A549 (cell line): ENCODE measurements at regions of chr19 and their contacts with region 1.

Region 1: GRCh38 chr19:30682999-30683536 is 310.9 kb downstream of the ZNF536 start:
- DNase-seq: peak; percentile 74 to 95
- ATAC-seq: peak; percentile 62 to 89
- H3K4me3 ChIP-seq: no peak overlapping the region
- H3K27ac ChIP-seq: no peak overlapping the region
- H3K4me1 ChIP-seq: peaks cover 3% of the 10 kb centered on the region; the same call in 1 of the 3 replicates
- CTCF ChIP-seq: peak; percentile 98
- EP300 ChIP-seq: no peak
- POLR2A ChIP-seq: no peak
- RAD21 ChIP-seq: peak; percentile 98

Region 2: DNA sequence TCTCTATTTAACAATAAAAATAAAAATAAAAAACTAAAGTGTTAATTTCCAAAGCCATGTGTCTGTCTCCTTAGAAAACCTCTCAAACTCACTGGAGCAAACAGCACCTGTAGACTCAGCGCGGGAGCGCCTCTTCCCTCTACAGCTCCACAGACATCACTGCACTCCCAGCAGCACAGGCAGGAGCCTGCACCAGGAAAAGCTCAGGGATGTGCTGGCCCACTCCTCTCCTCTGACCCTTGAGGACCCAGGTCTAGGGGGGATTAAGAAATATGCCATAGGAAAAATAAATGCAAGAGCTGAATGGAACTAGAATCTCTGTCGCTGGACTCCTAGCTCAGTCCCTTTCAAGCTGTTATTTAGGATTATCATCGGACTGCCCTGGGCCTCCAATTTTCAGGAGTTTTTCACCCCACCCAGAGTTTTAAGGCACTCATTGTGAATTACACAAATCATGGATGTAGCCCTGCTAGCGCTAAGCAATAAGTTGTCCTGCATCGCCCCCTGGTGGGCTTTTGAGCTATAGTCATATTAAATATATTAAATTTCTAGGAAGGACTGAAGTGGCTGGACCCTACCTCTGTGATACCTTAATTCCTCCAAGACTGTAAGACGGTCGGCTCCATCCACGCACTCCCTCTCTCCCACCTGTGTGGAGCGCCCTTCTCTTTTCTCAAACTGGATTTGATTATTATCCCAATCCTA is 1804.1 kb before region 1 on chr19:
- CTCF ChIA-PET with region 1: interaction called, 10 read pairs
- POLR2A ChIA-PET with region 1: no interaction called
- DNase-seq: peak; percentile 79 to 83
- ATAC-seq: peak; percentile 36 to 90; a peak in 4 of 6 replicates
- H3K4me3 ChIP-seq: no peak overlapping the region
- H3K27ac ChIP-seq: no peak overlapping the region
- H3K4me1 ChIP-seq: no peaks in the 10 kb centered on the region
- CTCF ChIP-seq: peak; percentile 86
- EP300 ChIP-seq: no peak
- POLR2A ChIP-seq: no peak
- RAD21 ChIP-seq: peak; percentile 89 to 94

Region 3: GRCh38 chr19:30590596-30591229 is 92.4 kb before region 1 on chr19:
- CTCF ChIA-PET with region 1: no interaction called
- POLR2A ChIA-PET with region 1: no interaction called
- DNase-seq: no peak
- ATAC-seq: no peak
- H3K4me3 ChIP-seq: no peak overlapping the region
- H3K27ac ChIP-seq: no peak overlapping the region
- H3K4me1 ChIP-seq: no peaks in the 10 kb centered on the region
- CTCF ChIP-seq: no peak
- EP300 ChIP-seq: no peak
- POLR2A ChIP-seq: no peak
- RAD21 ChIP-seq: no peak

Region 4: DNA sequence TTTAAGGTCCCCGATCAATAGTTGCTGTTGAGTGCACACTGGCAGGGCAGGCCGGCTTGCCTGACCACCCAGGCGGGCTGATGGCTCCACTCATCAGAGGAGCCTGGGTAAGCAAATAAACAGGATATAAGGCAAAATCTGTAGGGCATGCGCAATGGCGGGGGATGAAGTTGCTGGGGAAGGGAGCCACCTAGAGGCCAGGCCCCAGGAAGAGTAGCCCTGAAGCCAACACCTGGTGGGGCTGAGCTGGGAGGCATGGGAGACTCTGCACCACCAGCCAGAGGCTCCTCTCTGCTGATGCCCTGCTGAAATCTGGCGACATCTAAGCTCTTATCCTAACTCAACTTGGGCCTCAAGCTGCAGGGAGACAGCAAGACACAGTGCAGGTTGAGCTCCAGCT is 13.4 kb after region 1 on chr19:
- CTCF ChIA-PET with region 1: interaction called, 75 read pairs
- POLR2A ChIA-PET with region 1: no interaction called
- DNase-seq: peak; percentile 78 to 87
- ATAC-seq: peak; percentile 55 to 94; a peak in 5 of 6 replicates
- H3K4me3 ChIP-seq: no peak overlapping the region
- H3K27ac ChIP-seq: no peak overlapping the region
- H3K4me1 ChIP-seq: no peaks in the 10 kb centered on the region
- CTCF ChIP-seq: peak; percentile 37
- EP300 ChIP-seq: no peak
- POLR2A ChIP-seq: no peak
- RAD21 ChIP-seq: peak in 1 of 2 experiments; percentile 21; a peak in 1 of 5 replicates

Region 5: GRCh38 chr19:30719189-30719998 is 36.3 kb after region 1 on chr19:
- CTCF ChIA-PET with region 1: interaction called, 16 read pairs
- POLR2A ChIA-PET with region 1: no interaction called
- DNase-seq: peak in 1 of 2 experiments; percentile 33
- ATAC-seq: peak; percentile 73 to 80
- H3K4me3 ChIP-seq: peak overlapping the region; percentile 40
- H3K27ac ChIP-seq: 0 out of 6 replicates have a peak overlapping the region, but pooled peaks of 1 of the 2 experiments have one; percentile 20
- H3K4me1 ChIP-seq: peaks cover 4% of the 10 kb centered on the region; the same call in 1 of the 3 replicates
- CTCF ChIP-seq: 0 out of 3 replicates have a peak, but pooled peaks have one; percentile 10
- EP300 ChIP-seq: no peak
- POLR2A ChIP-seq: no peak
- RAD21 ChIP-seq: peak in 1 of 2 experiments; percentile 18; a peak in 1 of 5 replicates

Region 6: GRCh38 chr19:32224371-32225244 is 1541.5 kb after region 1 on chr19:
- CTCF ChIA-PET with region 1: interaction called, 74 read pairs
- POLR2A ChIA-PET with region 1: no interaction called
- DNase-seq: peak; percentile 71 to 91
- ATAC-seq: peak; percentile 82 to 96
- H3K4me3 ChIP-seq: no peak overlapping the region
- H3K27ac ChIP-seq: no peak overlapping the region
- H3K4me1 ChIP-seq: no peaks in the 10 kb centered on the region
- CTCF ChIP-seq: peak; percentile 100
- EP300 ChIP-seq: no peak
- POLR2A ChIP-seq: no peak
- RAD21 ChIP-seq: peak; percentile 94 to 100

Region 7: GRCh38 chr19:32357720-32358119 is 1674.7 kb after region 1 on chr19:
- CTCF ChIA-PET with region 1: interaction called, 10 read pairs
- POLR2A ChIA-PET with region 1: no interaction called
- DNase-seq: peak; percentile 46 to 61
- ATAC-seq: peak; percentile 66 to 73; a peak in 4 of 6 replicates
- H3K4me3 ChIP-seq: no peak overlapping the region
- H3K27ac ChIP-seq: no peak overlapping the region
- H3K4me1 ChIP-seq: peaks cover 17% of the 10 kb centered on the region
- CTCF ChIP-seq: peak; percentile 70
- EP300 ChIP-seq: no peak
- POLR2A ChIP-seq: no peak
- RAD21 ChIP-seq: peak; percentile 54 to 55